Mammary epithelial cell (primary cell): ENCODE measurements at regions of chr1 and their contacts with region 1.

Region 1: DNA sequence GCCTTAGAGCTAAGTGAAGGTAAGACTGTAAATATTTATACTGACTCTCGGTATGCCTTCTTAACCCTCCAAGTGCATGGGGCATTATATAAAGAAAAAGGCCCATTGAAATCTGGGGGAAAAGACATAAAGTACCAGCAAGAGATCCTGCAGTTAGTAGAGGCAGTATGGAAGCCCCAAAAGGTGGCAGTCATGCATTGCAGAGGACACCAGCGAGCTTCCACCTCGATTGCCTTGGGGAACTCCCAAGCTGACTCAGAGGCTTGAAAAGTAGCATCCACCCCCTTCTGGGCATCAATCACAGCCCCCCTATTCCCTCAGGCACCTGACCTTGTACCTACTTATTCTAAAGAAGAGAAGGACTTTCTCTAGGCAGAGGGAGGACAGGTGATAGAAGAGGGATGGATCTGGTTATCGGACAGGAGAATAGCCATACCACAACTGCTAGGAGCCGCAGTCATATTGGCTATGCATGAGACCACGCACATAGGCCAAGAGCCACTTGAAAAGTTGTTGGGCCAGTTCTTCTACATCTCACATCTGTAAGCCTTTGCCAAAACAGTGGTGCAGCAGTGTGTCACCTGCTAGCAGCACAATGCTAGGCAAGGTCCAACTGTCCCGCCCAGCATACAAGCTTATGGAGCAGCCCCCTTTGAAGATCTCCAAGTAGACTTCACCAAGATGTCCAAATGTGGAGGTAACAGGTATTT is 19.4 kb downstream of the PLA2G2F start:
- DNase-seq: peak; percentile 43
- H3K4me3 ChIP-seq: no peak overlapping the region
- H3K27ac ChIP-seq: no peak overlapping the region
- H3K4me1 ChIP-seq: no peaks in the 10 kb centered on the region
- H3K27me3 ChIP-seq: no peaks in the 10 kb centered on the region
- CTCF ChIP-seq: peak; percentile 10 to 35

Region 2: GRCh38 chr1:19981507-19982312 is 176.8 kb before region 1 on chr1:
- CTCF ChIA-PET with region 1: no interaction called
- dilution Hi-C with region 1: loop called (anchors 5 kb)
- in situ Hi-C with region 1: no loop called
- intact Hi-C with region 1: no loop called
- DNase-seq: no peak
- H3K4me3 ChIP-seq: no peak overlapping the region
- H3K27ac ChIP-seq: no peak overlapping the region
- H3K4me1 ChIP-seq: no peaks in the 10 kb centered on the region
- H3K27me3 ChIP-seq: no peaks in the 10 kb centered on the region
- CTCF ChIP-seq: no peak

Region 3: DNA sequence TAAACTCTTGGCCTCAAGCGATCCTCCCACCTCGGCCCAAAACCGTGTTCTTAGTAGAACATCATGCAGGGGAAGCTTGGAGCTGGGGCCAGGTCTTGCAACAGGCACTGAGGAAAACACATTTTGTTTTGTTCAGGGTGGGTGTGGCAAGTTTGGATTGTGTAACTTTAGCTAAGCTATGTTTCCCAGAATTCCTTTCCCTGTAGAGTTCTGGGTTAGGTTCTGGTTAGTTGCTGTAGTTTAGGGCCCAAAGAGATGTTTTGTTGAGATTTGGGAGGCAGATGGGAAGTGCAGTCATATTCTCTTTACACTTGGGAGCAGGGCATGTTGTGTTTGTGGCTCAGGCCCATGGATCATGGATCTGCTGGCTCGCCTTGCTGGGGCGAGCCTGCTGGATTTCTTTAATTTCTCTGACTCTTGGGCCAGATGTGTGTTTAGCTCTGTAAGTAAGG is 64.5 kb before region 1 on chr1:
- CTCF ChIA-PET with region 1: no interaction called
- dilution Hi-C with region 1: loop called (anchors 10 kb)
- in situ Hi-C with region 1: loop called in 1 of 2 experiments (anchors 5 kb)
- intact Hi-C with region 1: no loop called
- DNase-seq: no peak
- H3K4me3 ChIP-seq: no peak overlapping the region
- H3K27ac ChIP-seq: no peak overlapping the region
- H3K4me1 ChIP-seq: no peaks in the 10 kb centered on the region
- H3K27me3 ChIP-seq: no peaks in the 10 kb centered on the region
- CTCF ChIP-seq: no peak

Region 4: GRCh38 chr1:20485527-20486456 is 327.3 kb after region 1 on chr1 and contains the start of gene CAMK2N1:
- CTCF ChIA-PET with region 1: no interaction called
- dilution Hi-C with region 1: loop called (anchors 5 kb)
- in situ Hi-C with region 1: no loop called
- intact Hi-C with region 1: no loop called
- DNase-seq: peak; percentile 79
- H3K4me3 ChIP-seq: peak within 1 kb of the TSS; percentile 73 to 98 (median 94)
- H3K27ac ChIP-seq: peak within 1 kb of the TSS; percentile 79
- H3K4me1 ChIP-seq: peaks cover 28% of the 10 kb centered on the region
- H3K27me3 ChIP-seq: no peaks in the 10 kb centered on the region
- CTCF ChIP-seq: no peak
- total RNA-seq, gene CAMK2N1: 22.0 to 105 TPM